ENCODE measurements at regions of chr16 and their contacts with region 1.

Region 1: GRCh38 chr16:21338537-21339268 is 60.6 kb upstream of the CRYM start:
- DNase-seq: no peak
- ATAC-seq: no peak
- H3K4me3 Mint-ChIP-seq: no peak overlapping the region
- H3K27ac Mint-ChIP-seq: peak overlapping the region; percentile 57
- H3K4me1 Mint-ChIP-seq: no peaks in the 10 kb centered on the region
- H3K27me3 Mint-ChIP-seq: no peaks in the 10 kb centered on the region
- CTCF ChIP-seq: no peak

Region 2: DNA sequence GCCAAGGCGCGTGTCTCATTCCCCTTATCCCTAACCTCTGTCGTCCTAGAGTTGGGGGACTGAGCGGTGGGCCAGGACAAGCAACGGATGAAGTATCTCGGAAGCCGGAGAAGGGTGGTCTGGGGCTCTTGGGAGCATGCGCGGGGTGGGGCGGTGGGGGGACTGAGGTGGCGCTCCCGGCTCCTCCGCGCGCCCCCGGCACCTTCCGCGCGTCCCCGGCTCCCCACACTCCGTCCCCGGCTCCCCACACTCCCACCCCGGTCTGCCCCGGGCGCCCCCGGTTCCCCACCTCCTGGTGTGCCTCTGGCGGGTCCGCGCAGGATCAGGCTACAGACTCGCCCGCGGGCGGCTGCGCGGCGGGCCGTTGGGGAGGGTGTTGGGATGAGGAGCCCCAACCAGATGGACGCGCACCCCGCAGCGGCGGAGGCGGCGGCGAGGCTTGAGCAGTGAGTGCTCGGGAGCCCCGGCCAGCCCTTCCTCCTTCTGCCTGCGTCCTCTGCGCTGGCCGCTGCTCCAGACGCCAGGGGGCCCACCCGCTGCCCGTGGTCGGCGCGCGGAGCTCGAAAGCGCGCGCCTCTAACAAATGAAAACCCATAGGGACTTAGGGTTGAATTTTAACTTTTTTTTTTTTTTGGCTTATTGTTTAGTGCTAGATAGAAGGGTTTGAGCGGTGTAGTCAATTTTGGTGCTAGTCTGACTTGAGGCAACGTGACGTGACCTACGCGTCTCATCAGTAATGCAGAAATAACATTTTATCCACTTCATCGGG is 55.0 kb before region 1 on chr16:
- CTCF ChIA-PET with region 1: no interaction called
- POLR2A ChIA-PET with region 1: no interaction called
- intact Hi-C with region 1: loop called (anchors 10 kb)
- DNase-seq: peak; percentile 51
- ATAC-seq: peak; percentile 94
- H3K4me3 Mint-ChIP-seq: peak overlapping the region; percentile 80
- H3K27ac Mint-ChIP-seq: no peak overlapping the region
- H3K4me1 Mint-ChIP-seq: peaks cover 12% of the 10 kb centered on the region
- H3K27me3 Mint-ChIP-seq: peaks cover 22% of the 10 kb centered on the region
- CTCF ChIP-seq: no peak

Region 3: DNA sequence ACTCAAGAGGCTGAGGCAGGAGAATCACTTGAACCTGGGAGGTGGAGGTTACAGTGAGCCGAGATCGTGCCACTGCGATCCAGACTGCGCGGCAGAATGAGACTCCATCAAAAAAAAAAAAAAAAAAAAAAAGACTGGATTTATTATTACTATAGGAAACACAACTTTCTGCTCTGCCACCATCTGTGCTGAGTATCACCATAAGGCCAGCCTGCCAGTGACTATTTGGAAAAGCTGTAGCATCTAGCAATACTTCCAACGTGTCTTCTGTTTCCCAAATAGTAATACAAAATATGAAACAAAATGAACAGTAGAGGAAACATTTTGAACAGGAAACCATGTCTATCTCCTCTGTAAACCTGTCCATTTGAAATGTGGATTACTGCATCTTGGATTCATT is 17.0 kb before region 1 on chr16:
- CTCF ChIA-PET with region 1: no interaction called
- POLR2A ChIA-PET with region 1: no interaction called
- intact Hi-C with region 1: no loop called
- DNase-seq: no peak
- ATAC-seq: no peak
- H3K4me3 Mint-ChIP-seq: no peak overlapping the region
- H3K27ac Mint-ChIP-seq: no peak overlapping the region
- H3K4me1 Mint-ChIP-seq: no peaks in the 10 kb centered on the region
- H3K27me3 Mint-ChIP-seq: no peaks in the 10 kb centered on the region
- CTCF ChIP-seq: no peak

Measured in activated B cell treated with CpG ODN at 0.5 μM for 24 hours (primary cell).